ENCODE measurements at regions of chr22 and their contacts with region 1.

Region 1: DNA sequence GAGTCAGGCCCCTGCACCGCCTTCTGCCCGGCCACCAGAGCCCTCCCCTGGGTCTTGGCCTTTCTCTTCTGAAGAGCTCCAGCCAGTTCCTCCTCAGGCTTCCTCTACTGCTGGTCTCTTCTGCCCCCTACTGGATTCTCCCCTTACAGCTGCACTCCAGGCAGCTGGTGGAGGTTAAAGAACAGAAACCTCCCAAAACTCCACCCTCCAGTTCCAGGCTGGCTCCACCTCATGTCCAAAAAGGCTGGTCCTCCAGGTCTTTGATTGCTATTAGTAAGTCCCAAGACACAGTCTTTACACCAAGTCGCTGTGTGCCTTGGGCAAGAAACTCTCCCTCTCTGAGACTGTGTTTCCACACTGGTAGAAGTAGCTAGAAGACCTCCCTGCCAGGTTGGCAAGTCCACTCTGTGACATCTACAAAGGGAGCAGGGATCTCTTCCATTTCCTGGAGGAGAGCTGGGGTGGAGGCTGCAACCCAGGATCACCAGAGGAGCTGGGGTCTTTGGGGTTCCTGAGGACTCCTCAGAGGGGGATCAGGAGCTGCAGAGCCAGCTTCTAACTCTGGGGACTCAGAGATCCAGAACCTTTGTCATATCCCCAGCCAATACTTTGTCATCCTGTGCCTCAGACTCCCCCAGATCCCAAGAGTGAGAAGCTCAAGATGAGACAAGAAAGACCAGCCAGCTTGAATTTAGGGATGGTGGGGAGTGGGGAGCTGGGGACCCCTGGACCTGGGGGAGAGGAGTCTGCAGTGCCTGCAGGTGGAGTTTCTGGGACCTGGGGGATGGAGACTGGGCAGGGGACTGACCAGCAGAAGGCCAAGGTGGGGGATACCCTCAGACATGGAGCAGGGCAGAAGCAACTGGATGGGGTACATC is 3.4 kb upstream of the IGLL5 start:
- DNase-seq: peak; percentile 52
- H3K4me3 ChIP-seq: no peak overlapping the region
- H3K27ac ChIP-seq: no peak overlapping the region
- H3K4me1 ChIP-seq: no peaks in the 10 kb centered on the region
- H3K27me3 ChIP-seq: no peaks in the 10 kb centered on the region
- CTCF ChIP-seq: peak; percentile 42 to 75
- POLR2A ChIP-seq: no peak

Region 2: GRCh38 chr22:22666307-22667091 is 217.8 kb before region 1 on chr22:
- CTCF ChIA-PET with region 1: interaction called, 13 read pairs
- POLR2A ChIA-PET with region 1: no interaction called
- dilution Hi-C with region 1: no loop called
- intact Hi-C with region 1: no loop called
- DNase-seq: peak; percentile 10
- H3K4me3 ChIP-seq: no peak overlapping the region
- H3K27ac ChIP-seq: no peak overlapping the region
- H3K4me1 ChIP-seq: no peaks in the 10 kb centered on the region
- H3K27me3 ChIP-seq: peaks cover 0 to 1% of the 10 kb centered on the region in 2 experiments
- CTCF ChIP-seq: peak; percentile 43 to 72
- POLR2A ChIP-seq: no peak

Region 3: DNA sequence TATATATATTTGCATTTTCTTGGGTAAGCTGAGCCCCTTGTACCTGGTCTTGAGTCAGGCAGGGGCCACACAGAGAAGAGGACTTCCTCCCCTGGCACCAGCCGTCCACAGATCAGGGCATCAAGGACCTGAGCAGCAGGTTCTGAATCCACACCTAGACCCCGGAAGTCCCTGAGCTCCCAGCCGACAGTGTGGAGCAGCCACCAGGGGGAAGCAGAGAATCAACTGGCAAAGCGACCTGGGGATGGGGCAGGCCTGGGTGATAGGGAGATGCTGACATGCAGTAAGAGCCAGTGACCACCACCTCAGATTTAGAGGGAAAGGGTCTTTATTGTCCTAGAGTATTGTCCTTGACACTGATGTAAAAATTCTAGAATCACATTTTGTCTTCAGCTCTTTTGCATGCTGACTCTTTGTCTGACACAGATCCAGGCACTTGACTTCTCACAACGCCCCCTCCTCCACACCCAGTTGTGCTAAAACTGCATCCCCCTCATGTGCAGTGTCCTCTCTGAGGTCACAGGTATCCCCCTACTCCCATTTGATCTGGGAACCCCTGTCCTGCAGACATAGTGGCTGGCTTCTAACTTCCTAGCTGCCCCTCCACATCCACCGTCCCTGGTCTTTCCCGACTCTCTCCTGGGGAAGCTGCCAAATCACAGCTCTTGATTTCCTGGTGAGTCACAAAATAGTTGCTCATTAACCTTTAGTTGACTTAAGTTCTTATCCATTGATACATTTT is 130.6 kb before region 1 on chr22:
- CTCF ChIA-PET with region 1: interaction called, 25 read pairs
- POLR2A ChIA-PET with region 1: no interaction called
- dilution Hi-C with region 1: no loop called
- intact Hi-C with region 1: no loop called
- DNase-seq: peak; percentile 13
- H3K4me3 ChIP-seq: no peak overlapping the region
- H3K27ac ChIP-seq: no peak overlapping the region
- H3K4me1 ChIP-seq: no peaks in the 10 kb centered on the region
- H3K27me3 ChIP-seq: no peaks in the 10 kb centered on the region
- CTCF ChIP-seq: peak; percentile 55 to 64
- POLR2A ChIP-seq: no peak

Region 4: DNA sequence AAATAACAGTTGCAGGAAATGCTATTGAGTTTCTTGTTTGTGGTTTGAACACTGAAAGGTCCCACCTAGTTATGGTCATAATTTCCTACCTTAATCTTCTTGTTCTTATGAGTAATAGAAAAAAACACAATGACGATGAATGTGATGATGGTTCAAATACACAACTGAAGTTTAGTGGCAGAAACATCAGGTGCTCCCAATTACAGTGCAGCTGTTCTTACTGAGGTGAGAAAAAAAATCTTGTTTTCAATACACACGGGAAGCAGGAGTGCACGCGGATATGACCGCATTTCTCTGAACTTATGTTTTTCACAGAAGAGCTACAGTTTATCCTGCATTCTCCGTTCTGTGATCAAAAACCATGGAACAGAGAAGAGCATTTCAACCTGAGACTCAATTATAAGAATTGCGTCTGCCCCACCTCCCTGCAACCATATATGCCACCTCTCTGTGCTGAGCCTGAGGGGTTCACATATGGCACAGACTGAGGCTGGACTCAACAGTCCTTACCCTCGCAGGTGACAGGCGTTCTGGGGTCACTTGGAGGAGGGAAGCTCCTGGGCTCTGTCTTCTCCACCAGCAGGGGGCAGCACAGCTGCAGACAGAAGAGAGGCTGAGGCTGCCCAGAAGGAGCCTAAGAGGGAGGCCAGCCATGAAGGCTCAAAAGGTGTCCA is 96.3 kb before region 1 on chr22:
- CTCF ChIA-PET with region 1: interaction called, 75 read pairs
- POLR2A ChIA-PET with region 1: no interaction called
- dilution Hi-C with region 1: no loop called
- intact Hi-C with region 1: no loop called
- DNase-seq: peak; percentile 34
- H3K4me3 ChIP-seq: no peak overlapping the region
- H3K27ac ChIP-seq: no peak overlapping the region
- H3K4me1 ChIP-seq: no peaks in the 10 kb centered on the region
- H3K27me3 ChIP-seq: peaks cover 0 to 5% of the 10 kb centered on the region in 2 experiments
- CTCF ChIP-seq: peak; percentile 80 to 91
- POLR2A ChIP-seq: no peak

Region 5: GRCh38 chr22:22810018-22810427 is 74.2 kb before region 1 on chr22:
- CTCF ChIA-PET with region 1: interaction called, 72 read pairs
- POLR2A ChIA-PET with region 1: no interaction called
- dilution Hi-C with region 1: no loop called
- intact Hi-C with region 1: loop called (anchors 1 kb)
- DNase-seq: peak; percentile 7
- H3K4me3 ChIP-seq: no peak overlapping the region
- H3K27ac ChIP-seq: no peak overlapping the region
- H3K4me1 ChIP-seq: no peaks in the 10 kb centered on the region
- H3K27me3 ChIP-seq: peaks cover 8 to 16% of the 10 kb centered on the region in 2 experiments
- CTCF ChIP-seq: peak; percentile 80 to 82
- POLR2A ChIP-seq: no peak

Region 6: GRCh38 chr22:22855617-22856308 is 28.5 kb before region 1 on chr22:
- CTCF ChIA-PET with region 1: interaction called, 64 read pairs
- POLR2A ChIA-PET with region 1: no interaction called
- dilution Hi-C with region 1: no loop called
- intact Hi-C with region 1: no loop called
- DNase-seq: no peak
- H3K4me3 ChIP-seq: no peak overlapping the region
- H3K27ac ChIP-seq: no peak overlapping the region
- H3K4me1 ChIP-seq: no peaks in the 10 kb centered on the region
- H3K27me3 ChIP-seq: peaks cover 0 to 5% of the 10 kb centered on the region in 2 experiments
- CTCF ChIP-seq: peak; percentile 28 to 56
- POLR2A ChIP-seq: no peak

Measured in endothelial cell of umbilical vein (primary cell).